Endothelial cell of umbilical vein (primary cell): ENCODE measurements at regions of chr9 and their contacts with region 1.

Region 1: GRCh38 chr9:4555251-4555650 is 65.0 kb downstream of the SLC1A1 start:
- DNase-seq: peak; percentile 91
- H3K4me3 ChIP-seq: no peak overlapping the region
- H3K27ac ChIP-seq: peak overlapping the region; percentile 86
- H3K4me1 ChIP-seq: peaks cover 23% of the 10 kb centered on the region
- H3K27me3 ChIP-seq: no peaks in the 10 kb centered on the region
- CTCF ChIP-seq: no peak
- POLR2A ChIP-seq: no peak

Region 2: DNA sequence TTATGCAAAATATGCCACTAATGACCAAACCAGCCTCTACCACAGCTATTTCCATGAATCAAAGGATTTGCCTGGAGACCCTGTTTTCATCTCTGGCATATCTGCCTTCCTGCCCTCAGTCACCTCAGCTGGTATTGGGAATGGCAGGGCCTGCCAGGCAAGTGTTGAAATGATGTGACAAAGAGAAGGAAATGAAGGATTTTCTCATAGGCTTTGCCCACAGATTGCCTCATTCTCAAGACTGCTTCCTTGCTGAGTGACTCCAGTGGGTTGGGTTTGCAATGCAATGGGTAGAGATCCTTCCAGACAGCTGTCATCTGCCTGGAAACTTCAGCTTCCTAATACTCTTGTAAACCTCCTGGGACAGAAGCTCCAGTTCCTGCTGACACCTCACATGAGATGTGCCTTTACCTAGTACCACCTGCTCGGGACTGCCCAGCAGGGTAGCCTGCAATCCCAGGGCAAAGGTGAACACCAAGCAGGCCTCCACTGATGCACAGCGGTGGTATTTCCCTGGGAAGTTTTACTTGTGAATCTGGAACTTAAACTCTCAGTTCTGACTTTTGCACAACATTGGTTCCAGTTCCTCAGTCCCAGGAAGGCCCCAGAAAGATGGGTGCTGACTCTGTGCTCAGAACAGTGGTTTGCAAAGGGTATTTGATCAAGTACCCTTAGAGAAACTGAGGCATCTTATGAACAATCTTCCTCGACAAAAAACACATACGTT is 129.8 kb before region 1 on chr9:
- CTCF ChIA-PET with region 1: no interaction called
- POLR2A ChIA-PET with region 1: no interaction called
- dilution Hi-C with region 1: no loop called
- intact Hi-C with region 1: loop called (anchors 2 kb)
- DNase-seq: peak; percentile 63
- H3K4me3 ChIP-seq: no peak overlapping the region
- H3K27ac ChIP-seq: peak overlapping the region; percentile 64
- H3K4me1 ChIP-seq: peaks cover 30% of the 10 kb centered on the region
- H3K27me3 ChIP-seq: no peaks in the 10 kb centered on the region
- CTCF ChIP-seq: no peak
- POLR2A ChIP-seq: no peak

Region 3: GRCh38 chr9:4596165-4596922 is 41.1 kb after region 1 on chr9:
- CTCF ChIA-PET with region 1: interaction called, 3 read pairs
- POLR2A ChIA-PET with region 1: no interaction called
- dilution Hi-C with region 1: no loop called
- intact Hi-C with region 1: loop called (anchors 1 kb)
- DNase-seq: peak; percentile 89
- H3K4me3 ChIP-seq: peak overlapping the region in 1 of 3 experiments; percentile 11
- H3K27ac ChIP-seq: peak overlapping the region; percentile 58
- H3K4me1 ChIP-seq: peaks cover 17% of the 10 kb centered on the region
- H3K27me3 ChIP-seq: no peaks in the 10 kb centered on the region
- CTCF ChIP-seq: no peak
- POLR2A ChIP-seq: peak; percentile 19

Region 4: DNA sequence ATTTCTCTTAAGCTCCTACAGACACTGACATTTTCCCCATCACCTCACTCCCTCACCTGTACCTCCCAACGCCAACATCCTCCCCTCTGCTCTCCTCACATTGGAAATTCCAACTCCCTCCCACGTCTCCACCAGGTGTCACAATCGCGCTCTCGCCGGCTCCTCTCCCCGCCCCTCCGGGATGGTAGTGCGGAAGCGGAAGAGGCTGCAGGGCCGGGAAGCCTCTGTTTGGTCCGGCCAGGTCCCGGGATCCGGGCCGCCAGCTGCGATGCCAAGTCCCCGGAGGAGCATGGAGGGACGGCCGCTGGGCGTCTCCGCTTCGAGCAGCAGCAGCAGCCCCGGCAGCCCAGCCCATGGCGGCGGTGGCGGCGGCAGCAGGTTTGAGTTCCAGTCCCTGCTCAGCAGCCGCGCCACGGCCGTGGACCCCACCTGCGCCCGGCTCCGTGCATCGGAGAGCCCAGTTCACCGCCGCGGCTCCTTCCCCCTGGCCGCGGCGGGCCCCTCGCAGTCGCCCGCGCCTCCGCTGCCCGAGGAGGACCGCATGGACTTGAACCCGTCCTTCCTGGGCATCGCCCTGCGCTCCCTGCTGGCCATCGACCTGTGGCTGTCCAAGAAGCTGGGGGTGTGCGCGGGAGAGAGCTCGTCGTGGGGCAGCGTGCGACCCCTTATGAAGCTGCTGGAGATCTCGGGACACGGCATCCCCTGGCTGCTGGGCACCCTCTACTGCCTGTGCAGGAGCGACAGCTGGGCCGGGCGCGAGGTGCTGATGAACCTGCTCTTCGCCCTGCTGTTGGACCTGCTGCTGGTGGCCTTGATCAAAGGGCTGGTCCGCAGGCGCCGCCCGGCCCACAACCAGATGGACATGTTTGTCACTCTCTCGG is 107.1 kb after region 1 on chr9 and contains the start of gene PLPP6:
- CTCF ChIA-PET with region 1: no interaction called
- POLR2A ChIA-PET with region 1: no interaction called
- dilution Hi-C with region 1: no loop called
- intact Hi-C with region 1: loop called (anchors 2 kb)
- DNase-seq: peak; percentile 76
- H3K4me3 ChIP-seq: peak within 1 kb of the TSS; percentile 57 to 81 (median 71)
- H3K27ac ChIP-seq: peak within 1 kb of the TSS; percentile 10
- H3K4me1 ChIP-seq: peaks cover 32% of the 10 kb centered on the region
- H3K27me3 ChIP-seq: no peaks in the 10 kb centered on the region
- CTCF ChIP-seq: peak; percentile 18 to 57
- POLR2A ChIP-seq: peak; percentile 74
- total RNA-seq, gene PLPP6: 5.4 and 6.4 TPM in 2 replicates